Mammary epithelial cell (primary cell): ENCODE measurements at regions of chr22 and their contacts with region 1.

Region 1: DNA sequence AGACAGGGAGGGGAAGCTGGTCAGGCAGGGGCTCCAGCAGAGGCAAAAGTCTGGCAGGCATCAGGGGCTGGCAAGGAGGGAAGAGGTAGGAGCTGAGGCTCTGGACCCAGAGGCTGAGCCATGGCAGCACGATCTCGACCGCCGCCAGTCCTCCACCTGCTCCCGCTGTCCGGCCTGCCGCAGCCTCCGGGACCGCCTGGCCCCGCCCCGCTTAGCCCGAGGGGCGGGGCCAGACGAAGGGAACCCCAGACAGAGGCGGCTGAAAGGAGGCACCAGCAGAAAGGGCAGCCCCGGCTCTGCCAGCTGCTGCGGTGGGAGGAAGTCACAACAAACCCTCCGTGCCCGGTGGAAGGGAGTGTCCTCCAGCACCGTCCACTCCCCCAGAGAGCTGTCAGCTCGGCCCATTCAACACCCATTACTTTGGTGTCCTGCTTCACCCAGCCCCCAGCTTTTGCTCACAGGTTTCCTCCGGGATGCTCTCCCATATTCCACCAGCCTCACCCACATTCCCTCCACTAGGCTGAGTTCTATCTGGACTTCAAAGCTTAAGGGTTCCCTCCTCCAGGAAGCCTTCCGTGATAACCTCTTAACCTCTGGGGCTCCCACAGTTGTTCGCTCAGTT is at the start of gene MFNG:
- DNase-seq: peak; percentile 48
- H3K4me3 ChIP-seq: no peak within 1 kb of the TSS
- H3K27ac ChIP-seq: no peak within 1 kb of the TSS
- H3K4me1 ChIP-seq: peaks cover 3% of the 10 kb centered on the region
- H3K27me3 ChIP-seq: no peaks in the 10 kb centered on the region
- CTCF ChIP-seq: no peak
- total RNA-seq, gene MFNG: 3.5 to 48.9 TPM

Region 2: GRCh38 chr22:37394341-37394740 is 92.0 kb before region 1 on chr22:
- CTCF ChIA-PET with region 1: no interaction called
- dilution Hi-C with region 1: loop called (anchors 10 kb)
- in situ Hi-C with region 1: no loop called
- intact Hi-C with region 1: no loop called
- DNase-seq: no peak
- H3K4me3 ChIP-seq: no peak overlapping the region
- H3K27ac ChIP-seq: no peak overlapping the region
- H3K4me1 ChIP-seq: no peaks in the 10 kb centered on the region
- H3K27me3 ChIP-seq: no peaks in the 10 kb centered on the region
- CTCF ChIP-seq: no peak